B cell (primary cell): ENCODE measurements at regions of chr22 and their contacts with region 1.

Region 1: DNA sequence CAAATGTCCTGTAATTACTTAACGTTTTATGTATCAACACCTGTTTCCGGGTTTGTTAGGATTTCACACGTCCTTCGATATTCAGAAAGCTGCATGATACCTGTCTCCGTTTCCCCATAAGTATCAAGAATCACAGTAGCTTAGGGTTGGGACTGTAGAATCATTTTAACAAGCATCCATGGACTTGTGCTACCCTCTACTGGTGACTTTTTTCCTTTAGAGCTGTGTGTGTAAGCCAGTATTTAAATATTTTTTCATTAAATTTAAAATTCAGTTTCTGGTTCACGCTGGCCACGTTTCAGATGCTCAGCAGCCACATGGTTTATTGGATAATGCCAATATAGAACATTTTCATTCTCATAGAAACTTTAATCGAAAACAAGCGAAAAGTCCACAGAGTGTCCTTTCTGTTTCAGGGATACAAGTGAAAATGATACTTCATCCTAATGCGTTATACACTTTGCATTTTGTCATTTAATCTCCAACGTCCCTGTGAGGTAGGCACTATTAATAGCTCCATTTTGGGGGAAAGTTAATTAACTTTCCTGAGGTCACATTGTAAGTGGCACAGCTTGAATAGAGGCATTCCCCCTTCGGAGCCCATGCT is 61.5 kb upstream of the SLC25A18 start:
- DNase-seq: peak; percentile 82
- ATAC-seq: peak; percentile 78
- H3K4me3 ChIP-seq: no peak overlapping the region
- H3K4me3 Mint-ChIP-seq: no peak overlapping the region
- H3K27ac ChIP-seq: no peak overlapping the region
- H3K27ac Mint-ChIP-seq: no peak overlapping the region
- H3K4me1 ChIP-seq: peaks cover 0 to 3% of the 10 kb centered on the region in 2 donors
- H3K4me1 Mint-ChIP-seq: peaks cover 4% of the 10 kb centered on the region
- H3K27me3 ChIP-seq: no peaks in the 10 kb centered on the region
- H3K27me3 Mint-ChIP-seq: no peaks in the 10 kb centered on the region
- CTCF ChIP-seq: peak; percentile 91

Region 2: DNA sequence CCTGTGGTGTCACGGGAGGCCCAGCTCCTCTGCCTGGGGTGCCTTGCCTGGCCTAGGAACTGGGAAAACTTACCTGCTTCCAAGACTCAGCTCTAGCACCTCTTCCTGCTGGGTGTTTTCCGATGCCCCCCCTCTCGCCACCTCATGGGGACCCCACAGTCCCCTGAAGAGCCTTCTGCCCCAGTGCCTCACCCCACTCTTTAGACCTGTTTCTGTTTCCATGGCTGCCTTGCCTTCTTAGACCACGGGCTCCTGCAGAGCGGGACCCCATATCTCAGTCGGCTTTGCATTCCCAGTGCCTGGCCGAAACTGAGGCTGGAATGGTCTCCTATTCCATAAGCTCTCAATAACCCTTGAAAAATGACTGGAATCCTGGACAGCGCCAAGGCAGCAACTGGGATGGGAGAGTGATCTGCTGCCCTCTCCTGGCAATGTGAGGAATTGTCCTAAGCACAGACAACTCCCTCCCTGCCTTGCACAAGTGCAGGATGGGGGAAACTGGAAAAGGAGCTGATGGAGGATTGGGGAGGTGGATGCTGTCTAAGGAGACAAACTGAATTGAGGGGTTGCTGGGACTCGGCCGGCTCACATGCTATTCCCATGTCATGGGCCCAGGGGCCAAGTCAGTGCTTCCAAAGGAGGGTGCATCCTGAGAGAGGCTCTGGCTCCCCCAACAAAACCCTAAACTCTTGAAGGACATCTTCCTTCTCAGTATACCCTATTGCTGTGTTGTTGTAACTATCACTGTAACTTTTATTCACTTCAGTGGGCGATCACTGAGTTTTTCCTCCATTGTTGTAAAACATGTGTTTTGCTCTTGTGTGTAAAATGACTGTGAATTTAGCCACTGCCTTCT is 443.6 kb before region 1 on chr22:
- CTCF ChIA-PET with region 1: interaction called, 10 read pairs
- POLR2A ChIA-PET with region 1: no interaction called
- intact Hi-C with region 1: no loop called
- DNase-seq: peak; percentile 61
- ATAC-seq: peak; percentile 72
- H3K4me3 ChIP-seq: no peak overlapping the region
- H3K4me3 Mint-ChIP-seq: no peak overlapping the region
- H3K27ac ChIP-seq: no peak overlapping the region
- H3K27ac Mint-ChIP-seq: no peak overlapping the region
- H3K4me1 ChIP-seq: peaks cover 0 to 3% of the 10 kb centered on the region in 2 donors
- H3K4me1 Mint-ChIP-seq: peaks cover 2% of the 10 kb centered on the region
- H3K27me3 ChIP-seq: no peaks in the 10 kb centered on the region
- H3K27me3 Mint-ChIP-seq: no peaks in the 10 kb centered on the region
- CTCF ChIP-seq: peak; percentile 94

Region 3: DNA sequence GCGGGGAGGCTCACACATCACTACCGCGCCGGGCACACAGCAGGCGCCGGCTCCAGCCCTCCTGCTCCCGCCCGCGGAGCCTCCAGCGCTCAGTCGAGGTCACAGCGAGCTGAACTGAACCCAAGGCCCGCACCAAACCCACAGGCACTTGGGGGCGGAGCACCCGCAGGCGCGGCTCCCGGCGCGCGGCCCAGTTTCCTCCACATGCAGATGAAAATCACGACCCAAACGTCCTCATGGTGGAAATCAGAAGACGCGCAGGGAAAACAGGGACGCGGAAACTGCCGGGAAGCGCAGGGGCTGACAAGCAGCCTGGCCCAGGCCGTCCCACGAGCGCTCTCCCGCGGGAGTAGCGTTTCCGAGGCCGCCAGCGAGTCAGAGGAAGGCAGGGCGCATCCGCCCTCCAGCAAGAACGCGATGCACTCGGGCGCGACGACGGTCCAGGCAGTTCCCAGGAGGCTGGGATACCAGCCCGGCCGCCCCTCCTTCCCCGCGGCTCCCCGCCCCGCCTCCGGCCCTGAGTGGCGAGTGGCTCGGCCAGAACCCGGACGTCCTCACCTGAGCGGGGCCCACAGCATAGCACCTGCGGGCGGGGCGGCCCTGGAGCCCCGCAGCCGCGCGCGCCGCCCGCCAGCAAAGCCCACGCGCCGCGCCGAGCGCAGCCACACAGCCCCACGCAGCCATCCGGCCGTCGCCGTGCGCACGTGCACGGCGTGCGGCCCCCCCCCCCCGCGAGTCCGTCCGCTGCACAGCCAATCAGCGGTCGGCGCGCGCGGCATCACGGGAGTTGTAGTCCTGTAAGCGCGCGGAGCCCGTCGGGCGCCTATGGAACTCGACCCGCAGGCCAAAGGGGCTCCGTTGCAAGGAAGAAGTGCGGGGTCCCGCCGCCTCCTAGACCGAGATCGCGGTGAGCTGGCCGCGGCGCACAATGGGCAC is 342.9 kb before region 1 on chr22 and contains the start of gene HDHD5:
- CTCF ChIA-PET with region 1: interaction called, 12 read pairs
- POLR2A ChIA-PET with region 1: no interaction called
- intact Hi-C with region 1: no loop called
- DNase-seq: peak; percentile 93
- ATAC-seq: peak; percentile 92
- H3K4me3 ChIP-seq: peak within 1 kb of the TSS; percentile 30 to 92 (median 84)
- H3K4me3 Mint-ChIP-seq: peak within 1 kb of the TSS; percentile 88
- H3K27ac ChIP-seq: peak within 1 kb of the TSS; percentile 38 to 75
- H3K27ac Mint-ChIP-seq: peak within 1 kb of the TSS; percentile 75
- H3K4me1 ChIP-seq: peaks cover 12 to 21% of the 10 kb centered on the region in 2 donors
- H3K4me1 Mint-ChIP-seq: peaks cover 21% of the 10 kb centered on the region
- H3K27me3 ChIP-seq: no peaks in the 10 kb centered on the region
- H3K27me3 Mint-ChIP-seq: no peaks in the 10 kb centered on the region
- CTCF ChIP-seq: no peak
- total RNA-seq, gene HDHD5: 17.7 and 23.3 TPM in 2 replicates

Region 4: GRCh38 chr22:17199003-17199731 is 302.6 kb before region 1 on chr22:
- CTCF ChIA-PET with region 1: interaction called, 145 read pairs
- POLR2A ChIA-PET with region 1: no interaction called
- intact Hi-C with region 1: no loop called
- DNase-seq: no peak
- ATAC-seq: no peak
- H3K4me3 ChIP-seq: no peak overlapping the region
- H3K4me3 Mint-ChIP-seq: no peak overlapping the region
- H3K27ac ChIP-seq: no peak overlapping the region
- H3K27ac Mint-ChIP-seq: no peak overlapping the region
- H3K4me1 ChIP-seq: no peaks in the 10 kb centered on the region
- H3K4me1 Mint-ChIP-seq: no peaks in the 10 kb centered on the region
- H3K27me3 ChIP-seq: no peaks in the 10 kb centered on the region
- H3K27me3 Mint-ChIP-seq: no peaks in the 10 kb centered on the region
- CTCF ChIP-seq: no peak

Region 5: DNA sequence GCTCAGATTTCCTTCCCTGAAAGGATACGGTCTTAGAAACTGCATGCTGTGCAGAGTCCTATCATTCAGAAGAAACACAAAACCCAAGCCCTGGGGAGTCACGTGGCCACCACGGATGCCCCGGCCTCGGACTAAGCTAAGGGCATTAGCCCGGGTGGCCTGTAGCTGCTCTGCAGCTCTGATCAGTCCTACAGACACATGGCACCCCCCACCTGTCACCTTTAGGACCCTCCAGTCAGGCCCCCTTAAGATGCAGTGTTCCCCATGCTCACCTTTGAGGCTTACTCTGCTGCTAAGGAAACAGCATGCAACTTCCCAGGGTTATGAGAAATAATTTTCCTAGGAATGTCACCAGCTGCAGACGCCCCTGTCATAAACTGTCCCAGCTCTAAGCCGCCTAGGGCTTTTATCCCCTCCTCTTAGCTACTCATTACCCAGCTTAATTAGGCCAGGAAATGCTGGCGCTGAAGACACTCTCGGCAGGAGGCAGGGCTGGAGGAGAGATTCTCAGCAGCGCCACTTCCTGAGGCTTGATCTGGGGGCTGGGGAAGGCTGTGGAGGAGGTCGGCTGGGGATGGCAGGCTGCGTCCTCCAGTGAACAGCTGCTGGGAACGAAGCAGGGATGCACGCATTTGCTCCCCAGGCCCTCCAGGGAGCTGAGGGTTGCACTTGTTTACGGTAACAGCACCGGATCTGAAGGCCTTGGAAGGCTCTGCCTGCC is 235.4 kb before region 1 on chr22:
- CTCF ChIA-PET with region 1: interaction called, 12 read pairs
- POLR2A ChIA-PET with region 1: interaction called, 4 read pairs
- intact Hi-C with region 1: loop called (anchors 2 kb)
- DNase-seq: no peak
- ATAC-seq: no peak
- H3K4me3 ChIP-seq: no peak overlapping the region
- H3K4me3 Mint-ChIP-seq: no peak overlapping the region
- H3K27ac ChIP-seq: no peak overlapping the region
- H3K27ac Mint-ChIP-seq: no peak overlapping the region
- H3K4me1 ChIP-seq: peaks cover 0 to 4% of the 10 kb centered on the region in 2 donors
- H3K4me1 Mint-ChIP-seq: peaks cover 6% of the 10 kb centered on the region
- H3K27me3 ChIP-seq: no peaks in the 10 kb centered on the region
- H3K27me3 Mint-ChIP-seq: no peaks in the 10 kb centered on the region
- CTCF ChIP-seq: no peak

Region 6: DNA sequence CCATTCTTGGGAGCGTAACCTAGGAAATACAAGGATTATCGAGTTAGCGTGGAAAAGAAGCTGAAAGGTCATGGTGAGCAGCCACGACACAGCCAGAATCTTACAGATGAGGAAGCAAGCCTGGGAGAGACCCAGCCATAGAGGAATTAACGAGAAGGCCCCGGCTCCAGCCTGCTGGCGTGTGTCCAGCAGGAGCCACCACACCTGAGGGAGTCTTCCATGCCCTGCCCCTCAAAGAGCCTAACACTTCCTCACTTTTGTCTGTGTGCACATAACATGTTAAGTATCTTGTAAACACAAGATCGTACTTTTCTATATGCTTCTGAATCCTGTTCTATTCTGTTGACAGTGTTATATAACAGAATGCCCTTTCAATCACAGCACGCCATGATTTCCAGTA is 114.4 kb before region 1 on chr22:
- CTCF ChIA-PET with region 1: no interaction called
- POLR2A ChIA-PET with region 1: no interaction called
- intact Hi-C with region 1: no loop called
- DNase-seq: no peak
- ATAC-seq: no peak
- H3K4me3 ChIP-seq: no peak overlapping the region
- H3K4me3 Mint-ChIP-seq: no peak overlapping the region
- H3K27ac ChIP-seq: no peak overlapping the region
- H3K27ac Mint-ChIP-seq: no peak overlapping the region
- H3K4me1 ChIP-seq: no peaks in the 10 kb centered on the region
- H3K4me1 Mint-ChIP-seq: no peaks in the 10 kb centered on the region
- H3K27me3 ChIP-seq: no peaks in the 10 kb centered on the region
- H3K27me3 Mint-ChIP-seq: no peaks in the 10 kb centered on the region
- CTCF ChIP-seq: no peak